ENCODE measurements at regions of chr1 and their contacts with region 1.

Region 1: GRCh38 chr1:167066333-167067122 is 23.6 kb downstream of the GPA33 start:
- DNase-seq: peak; percentile 65 to 88 (median 72)
- ATAC-seq: peak; percentile 57 to 93 (median 87)
- H3K4me3 ChIP-seq: peak overlapping the region in 7 of 12 donors; percentile 14 to 41 (median 34)
- H3K27ac ChIP-seq: no peak overlapping the region
- H3K4me1 ChIP-seq: peaks cover 0 to 13% (median 4%) of the 10 kb centered on the region in 12 donors
- H3K27me3 ChIP-seq: peaks cover 0 to 3% (median 0%) of the 10 kb centered on the region in 9 donors
- CTCF ChIP-seq: peak; percentile 90 to 98 (median 97)
- POLR2A ChIP-seq: no peak

Region 2: DNA sequence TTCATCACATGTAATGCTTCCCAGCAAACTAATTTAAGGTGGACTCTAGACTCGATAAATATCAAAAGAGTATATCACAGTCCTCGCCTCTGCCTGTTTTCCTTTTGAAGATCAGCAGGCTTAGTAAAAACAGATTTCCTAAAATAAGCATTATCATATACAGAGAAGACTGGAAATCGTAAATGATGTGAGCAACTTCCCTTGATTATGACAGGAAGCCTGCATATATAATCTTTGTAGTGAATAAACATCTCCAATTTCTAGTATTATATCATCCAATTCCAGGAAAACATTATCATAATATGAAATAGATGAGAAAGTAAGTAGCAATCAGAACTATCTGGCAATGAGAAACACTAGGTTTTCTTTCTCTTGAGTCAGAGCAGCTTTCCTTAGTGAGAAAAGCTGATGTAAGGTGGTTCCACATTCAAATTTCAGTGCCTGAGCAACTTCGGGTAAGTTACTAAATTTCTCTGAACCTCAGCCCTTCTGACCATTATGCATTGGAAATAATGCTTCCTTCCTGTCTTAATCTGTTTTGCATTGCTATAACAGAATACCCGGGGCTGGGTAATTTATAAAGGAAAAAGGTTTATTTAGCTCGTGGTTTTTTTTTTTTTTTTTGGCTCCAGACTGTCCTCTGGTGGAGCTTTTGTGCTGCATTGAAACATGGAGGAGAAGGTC is 141.6 kb after region 1 on chr1:
- intact Hi-C with region 1: loop called in 5 of 10 experiments (anchors 5 to 10 kb)
- DNase-seq: no peak
- ATAC-seq: peak in 1 of 4 donors; percentile 36
- H3K4me3 ChIP-seq: no peak overlapping the region
- H3K27ac ChIP-seq: no peak overlapping the region
- H3K4me1 ChIP-seq: peaks cover 0 to 5% (median 0%) of the 10 kb centered on the region in 12 donors
- H3K27me3 ChIP-seq: no peaks in the 10 kb centered on the region
- CTCF ChIP-seq: peak in 8 of 12 donors; percentile 11 to 48 (median 27)
- POLR2A ChIP-seq: no peak

Region 3: DNA sequence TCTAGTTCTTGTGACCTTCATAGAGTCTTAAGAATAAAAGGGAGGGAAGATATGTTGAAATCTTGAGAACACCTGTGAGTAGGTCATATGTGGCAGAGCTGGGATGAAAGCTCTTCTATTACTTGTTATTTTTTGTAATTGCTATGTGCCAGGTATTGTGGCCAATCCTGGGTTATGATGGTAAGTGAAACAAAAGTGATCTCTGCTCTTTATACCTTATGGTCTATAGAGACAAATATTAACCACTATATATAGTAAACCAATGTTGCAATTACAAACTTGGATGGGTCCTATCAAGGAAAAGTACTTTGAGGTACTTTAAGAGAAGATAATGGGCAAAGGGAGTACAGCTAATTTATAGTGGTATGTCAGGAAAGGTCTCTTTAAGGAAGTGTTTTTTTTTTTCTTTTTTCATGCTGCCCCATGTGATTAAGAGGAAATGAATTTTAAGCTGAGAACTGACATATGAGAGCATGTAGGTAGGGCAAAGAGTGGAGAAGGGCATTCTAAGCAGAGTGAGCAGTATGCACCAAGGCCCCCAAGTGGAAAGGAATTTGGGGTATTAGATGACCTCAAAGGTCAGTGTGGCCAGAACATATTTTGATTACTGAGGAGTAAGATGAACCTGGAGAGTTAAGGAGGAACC is 197.4 kb after region 1 on chr1:
- intact Hi-C with region 1: loop called in 3 of 10 experiments (anchors 5 to 10 kb)
- DNase-seq: no peak
- ATAC-seq: peak in 2 of 4 donors; percentile 11 to 34
- H3K4me3 ChIP-seq: no peak overlapping the region
- H3K27ac ChIP-seq: peak overlapping the region in 1 of 12 donors; percentile 42
- H3K4me1 ChIP-seq: peaks cover 0 to 66% (median 41%) of the 10 kb centered on the region in 12 donors
- H3K27me3 ChIP-seq: no peaks in the 10 kb centered on the region
- CTCF ChIP-seq: no peak
- POLR2A ChIP-seq: no peak

Region 4: GRCh38 chr1:167442124-167442848 is 375.8 kb after region 1 on chr1:
- intact Hi-C with region 1: loop called in 9 of 10 experiments (anchors 1 to 5 kb)
- DNase-seq: peak; percentile 79 to 91 (median 87)
- ATAC-seq: peak; percentile 86 to 96 (median 94)
- H3K4me3 ChIP-seq: no peak overlapping the region
- H3K27ac ChIP-seq: no peak overlapping the region
- H3K4me1 ChIP-seq: peaks cover 0 to 17% (median 9%) of the 10 kb centered on the region in 12 donors
- H3K27me3 ChIP-seq: peaks cover 0 to 18% (median 10%) of the 10 kb centered on the region in 9 donors
- CTCF ChIP-seq: peak; percentile 79 to 94 (median 88)
- POLR2A ChIP-seq: no peak

Measured in heart left ventricle (tissue), 16 donors.